ENCODE measurements at regions of chr20 and their contacts with region 1.

Region 1: DNA sequence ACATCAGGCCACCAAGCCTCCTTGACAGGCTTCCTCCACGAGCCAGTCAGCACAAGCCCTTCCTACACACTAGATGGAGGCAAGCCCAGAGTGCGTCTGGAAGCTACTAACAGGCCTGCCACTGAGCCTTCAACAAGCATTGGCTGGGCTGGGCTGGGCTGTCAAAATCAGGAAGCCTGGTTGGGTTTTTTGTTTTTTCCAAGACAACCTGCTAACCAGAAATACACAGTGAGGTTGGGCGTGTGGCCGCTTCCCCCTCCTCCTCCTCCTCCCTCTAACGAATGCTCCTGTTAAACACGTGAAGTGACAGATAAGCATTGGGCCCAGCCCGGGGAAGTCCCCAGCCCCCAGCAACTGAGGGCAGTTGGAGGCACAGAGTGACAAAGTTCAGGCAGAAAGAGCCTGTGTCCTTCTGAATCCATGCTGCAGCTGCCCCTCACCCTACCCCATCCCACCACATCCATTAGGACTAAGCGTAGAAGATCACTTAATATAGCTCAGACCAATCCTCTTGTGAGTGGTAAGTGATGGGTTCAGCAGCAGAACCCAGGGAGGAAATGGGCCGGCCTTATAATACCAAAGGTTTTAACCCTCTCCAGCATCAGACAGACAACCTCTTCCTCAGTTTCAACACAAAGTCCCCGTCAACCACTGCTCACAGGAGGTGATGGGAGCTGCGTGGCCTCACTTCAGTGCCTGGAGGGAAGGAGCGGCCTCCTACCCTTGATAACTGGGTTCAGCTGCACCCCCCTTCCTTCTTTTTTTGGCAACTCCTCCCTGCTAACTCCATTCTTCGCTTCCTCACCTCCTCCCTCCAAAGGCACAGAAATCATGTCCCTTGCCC is 1.1 kb downstream of the NFATC2 start:
- DNase-seq: peak; percentile 86
- H3K4me3 Mint-ChIP-seq: peak overlapping the region; percentile 100
- H3K27ac Mint-ChIP-seq: peak overlapping the region; percentile 100
- H3K4me1 Mint-ChIP-seq: peaks cover 63% of the 10 kb centered on the region
- H3K27me3 Mint-ChIP-seq: peaks cover 9% of the 10 kb centered on the region

Region 2: DNA sequence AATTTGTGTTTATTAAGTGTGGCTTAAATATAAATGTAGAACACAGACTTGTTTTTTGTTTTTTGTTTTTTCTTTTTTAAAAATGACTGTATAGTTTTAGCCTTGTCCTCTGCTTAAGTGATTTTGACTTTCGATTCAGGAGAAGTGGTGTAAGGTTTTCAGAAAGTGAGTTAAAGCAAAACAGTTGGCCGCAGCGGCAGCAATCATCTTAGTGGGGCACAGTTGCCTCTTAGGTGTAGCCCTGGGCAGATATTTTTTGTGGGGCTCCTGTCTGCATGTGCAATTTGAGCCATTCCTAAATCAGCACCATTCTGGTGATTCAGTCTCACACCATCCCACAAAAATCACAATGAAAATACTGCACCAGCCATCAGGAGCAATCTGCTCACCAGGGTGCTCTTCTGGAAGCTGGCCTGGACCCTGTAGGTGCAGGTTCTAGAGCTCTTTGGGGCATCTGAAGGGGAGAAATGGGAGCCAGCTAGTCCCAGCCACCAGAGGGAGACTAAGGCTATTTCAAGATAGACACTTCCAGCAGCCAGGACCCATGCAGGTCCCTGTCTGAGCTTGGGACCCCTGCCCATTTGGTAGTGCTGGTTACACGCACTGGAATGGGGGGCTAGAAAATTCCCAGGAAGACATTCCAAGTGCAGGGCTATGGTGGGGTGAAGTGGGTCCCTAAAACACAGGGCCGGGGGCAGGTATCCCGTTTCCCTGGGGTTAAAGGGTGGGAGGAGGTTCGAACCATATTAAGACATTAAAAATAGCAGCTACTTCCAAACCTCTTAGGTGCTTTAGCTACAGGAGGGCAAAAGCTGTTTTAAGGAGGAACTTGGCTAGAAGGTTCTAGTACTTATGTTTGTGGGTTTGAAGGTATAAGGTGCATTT is 155.5 kb before region 1 on chr20:
- intact Hi-C with region 1: loop called (anchors 1 kb)
- DNase-seq: no peak
- H3K4me3 Mint-ChIP-seq: peak overlapping the region; percentile 50
- H3K27ac Mint-ChIP-seq: no peak overlapping the region
- H3K4me1 Mint-ChIP-seq: peaks cover 78% of the 10 kb centered on the region
- H3K27me3 Mint-ChIP-seq: no peaks in the 10 kb centered on the region

Region 3: DNA sequence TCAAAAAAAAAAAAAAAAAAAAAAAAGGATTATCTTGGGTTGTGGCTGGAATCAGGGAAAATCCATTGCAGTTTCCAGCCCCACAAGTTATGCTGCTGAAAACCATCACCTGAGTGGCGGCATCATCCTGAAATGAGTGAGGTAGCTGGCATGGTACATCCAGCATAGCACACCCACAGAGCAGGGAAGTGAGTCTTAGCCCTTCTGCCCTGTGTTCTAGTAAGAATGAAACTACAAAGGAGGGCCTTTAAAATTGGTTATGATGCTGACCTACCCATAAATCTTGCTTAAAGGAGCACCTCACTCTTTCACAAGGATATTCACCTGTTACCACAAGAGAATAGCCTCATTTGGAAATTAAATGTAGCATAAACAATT is 118.1 kb before region 1 on chr20:
- intact Hi-C with region 1: loop called (anchors 1 kb)
- DNase-seq: no peak
- H3K4me3 Mint-ChIP-seq: peak overlapping the region; percentile 22
- H3K27ac Mint-ChIP-seq: peak overlapping the region; percentile 72
- H3K4me1 Mint-ChIP-seq: peaks cover 77% of the 10 kb centered on the region
- H3K27me3 Mint-ChIP-seq: no peaks in the 10 kb centered on the region

Region 4: GRCh38 chr20:51512645-51513044 is 28.8 kb before region 1 on chr20:
- intact Hi-C with region 1: loop called (anchors 1 kb)
- DNase-seq: no peak
- H3K4me3 Mint-ChIP-seq: peak overlapping the region; percentile 1
- H3K27ac Mint-ChIP-seq: peak overlapping the region; percentile 70
- H3K4me1 Mint-ChIP-seq: peaks cover 70% of the 10 kb centered on the region
- H3K27me3 Mint-ChIP-seq: no peaks in the 10 kb centered on the region

Region 5: DNA sequence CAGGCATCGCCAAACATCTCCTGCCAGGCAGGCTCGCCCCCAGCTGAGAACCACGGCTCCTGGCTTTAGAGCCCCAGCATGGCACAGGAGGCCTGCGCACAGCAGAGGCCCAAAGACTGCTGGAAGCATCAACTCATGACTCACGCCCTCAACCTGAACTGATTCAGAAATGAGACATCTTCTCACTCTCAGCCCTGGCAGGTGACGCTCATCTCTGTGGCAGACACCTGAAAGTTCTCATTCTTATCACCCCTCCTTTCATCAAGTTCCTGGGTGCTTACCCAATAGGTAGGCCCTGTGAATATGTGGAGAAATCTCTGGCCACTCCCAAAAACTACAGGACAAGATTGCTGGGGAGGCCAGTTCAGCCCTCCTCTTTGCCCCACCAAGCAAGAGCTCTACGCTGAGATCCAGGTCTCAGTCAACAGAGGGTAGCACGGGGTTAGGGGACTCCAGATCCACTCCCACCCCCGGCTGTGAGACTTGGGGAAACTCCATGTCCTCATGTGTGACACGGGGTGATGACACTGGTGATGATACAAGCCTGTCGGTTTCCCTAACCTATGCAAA is 10.2 kb before region 1 on chr20:
- intact Hi-C with region 1: loop called (anchors 1 kb)
- DNase-seq: peak; percentile 58
- H3K4me3 Mint-ChIP-seq: peak overlapping the region; percentile 84
- H3K27ac Mint-ChIP-seq: peak overlapping the region; percentile 99
- H3K4me1 Mint-ChIP-seq: peaks cover 92% of the 10 kb centered on the region
- H3K27me3 Mint-ChIP-seq: no peaks in the 10 kb centered on the region

Region 6: GRCh38 chr20:51631011-51631950 is 89.9 kb after region 1 on chr20:
- intact Hi-C with region 1: loop called (anchors 2 kb)
- DNase-seq: peak; percentile 7
- H3K4me3 Mint-ChIP-seq: peak overlapping the region; percentile 5
- H3K27ac Mint-ChIP-seq: peak overlapping the region; percentile 70
- H3K4me1 Mint-ChIP-seq: peaks cover 43% of the 10 kb centered on the region
- H3K27me3 Mint-ChIP-seq: peaks cover 7% of the 10 kb centered on the region

Region 7: GRCh38 chr20:51650685-51651134 is 109.3 kb after region 1 on chr20:
- intact Hi-C with region 1: no loop called
- DNase-seq: no peak
- H3K4me3 Mint-ChIP-seq: no peak overlapping the region
- H3K27ac Mint-ChIP-seq: no peak overlapping the region
- H3K4me1 Mint-ChIP-seq: no peaks in the 10 kb centered on the region
- H3K27me3 Mint-ChIP-seq: peaks cover 11% of the 10 kb centered on the region

Measured in activated T-helper 1 cell treated with anti-CD3 and anti-CD28 coated beads, Interleukin-12 subunit alpha, Interleukin-12 subunit beta, Interleukin-2, Interleukin-4 antibody, amounts not matched to agents 30 ng/mL and 10 ng/mL and 1 ng/mL, durations not matched to agents 14 hours and 24 hours and 36 hours (primary cell).